Gastrocnemius medialis (tissue), 4 donors: ENCODE measurements at regions of chr19 and their contacts with region 1.

Region 1: GRCh38 chr19:44570984-44571684 is 41.7 kb upstream of the CEACAM20 start:
- DNase-seq: peak; percentile 31 to 32
- ATAC-seq: peak; percentile 74 to 84
- H3K4me3 ChIP-seq: no peak overlapping the region
- H3K27ac ChIP-seq: no peak overlapping the region
- H3K4me1 ChIP-seq: no peaks in the 10 kb centered on the region
- H3K27me3 ChIP-seq: peaks cover 0 to 3% (median 0%) of the 10 kb centered on the region in 3 donors
- CTCF ChIP-seq: peak; percentile 39 to 77 (median 68)
- POLR2A ChIP-seq: no peak

Region 2: GRCh38 chr19:44539236-44539826 is 31.8 kb before region 1 on chr19:
- in situ Hi-C with region 1: no loop called
- intact Hi-C with region 1: no loop called
- DNase-seq: no peak
- ATAC-seq: no peak
- H3K4me3 ChIP-seq: no peak overlapping the region
- H3K27ac ChIP-seq: no peak overlapping the region
- H3K4me1 ChIP-seq: no peaks in the 10 kb centered on the region
- H3K27me3 ChIP-seq: peaks cover 0 to 3% (median 0%) of the 10 kb centered on the region in 3 donors
- CTCF ChIP-seq: no peak
- POLR2A ChIP-seq: no peak

Region 3: GRCh38 chr19:44643605-44644401 is 72.7 kb after region 1 on chr19 and contains the start of gene PVR:
- in situ Hi-C with region 1: no loop called
- intact Hi-C with region 1: no loop called
- DNase-seq: peak; percentile 45 to 72
- ATAC-seq: peak; percentile 72 to 76
- H3K4me3 ChIP-seq: peak within 1 kb of the TSS; percentile 75 to 98 (median 92)
- H3K27ac ChIP-seq: peak within 1 kb of the TSS; percentile 88 to 97 (median 95)
- H3K4me1 ChIP-seq: peaks cover 41 to 42% of the 10 kb centered on the region in 2 donors
- H3K27me3 ChIP-seq: no peaks in the 10 kb centered on the region
- CTCF ChIP-seq: peak in 1 of 5 experiments; percentile 13
- POLR2A ChIP-seq: peak; percentile 84 to 86
- total RNA-seq, gene PVR: 27.3 to 60.2 (median 33.9) TPM

Region 4: GRCh38 chr19:44657211-44657921 is 86.2 kb after region 1 on chr19:
- in situ Hi-C with region 1: loop called (anchors 5 kb)
- intact Hi-C with region 1: loop called (anchors 1 kb)
- DNase-seq: peak in 1 of 2 donors; percentile 36
- ATAC-seq: peak; percentile 60 to 65
- H3K4me3 ChIP-seq: no peak overlapping the region
- H3K27ac ChIP-seq: no peak overlapping the region
- H3K4me1 ChIP-seq: no peaks in the 10 kb centered on the region
- H3K27me3 ChIP-seq: no peaks in the 10 kb centered on the region
- CTCF ChIP-seq: peak; percentile 82 to 95 (median 91)
- POLR2A ChIP-seq: no peak